Heart left ventricle (tissue), 16 donors: ENCODE measurements at regions of chr20 and their contacts with region 1.

Region 1: DNA sequence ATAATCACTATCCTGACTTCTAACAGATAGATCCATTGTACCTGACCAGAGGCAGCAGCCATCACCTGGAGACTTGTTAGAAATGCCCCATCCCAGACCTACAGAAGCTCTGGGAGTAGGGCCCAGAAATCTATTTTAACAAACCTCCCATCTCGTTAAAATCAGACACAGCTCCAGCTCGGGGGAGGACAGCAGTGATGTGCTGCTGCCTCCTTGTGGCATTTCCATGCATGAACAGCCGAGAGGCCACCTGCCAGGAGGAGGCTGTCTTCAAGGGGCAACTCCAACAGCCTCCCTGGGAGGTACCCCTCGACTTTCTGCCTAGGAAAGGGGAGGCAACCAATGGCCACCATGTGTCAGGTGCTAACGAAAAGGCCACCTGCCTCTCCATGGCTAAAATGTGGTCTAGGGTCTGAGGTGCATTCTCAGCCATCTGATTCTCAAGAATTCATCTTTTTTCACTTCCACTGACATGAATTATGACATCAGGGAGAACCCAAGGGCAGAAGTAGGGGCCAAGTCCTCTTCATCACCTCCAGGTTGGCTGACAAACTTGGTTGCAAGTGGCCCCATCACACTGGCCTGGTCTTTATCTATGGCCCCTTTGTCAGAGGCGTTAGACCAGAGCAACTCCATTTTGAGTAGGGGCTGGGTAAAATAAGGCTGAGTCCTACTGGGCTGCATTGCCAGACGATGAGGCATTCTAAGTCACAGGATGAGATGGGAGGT is 12.2 kb upstream of the KCNK15 start:
- DNase-seq: peak in 4 of 5 donors; percentile 56 to 69 (median 64)
- ATAC-seq: peak; percentile 39 to 59 (median 48)
- H3K4me3 ChIP-seq: no peak overlapping the region
- H3K27ac ChIP-seq: no peak overlapping the region
- H3K4me1 ChIP-seq: peaks cover 0 to 37% (median 11%) of the 10 kb centered on the region in 12 donors
- H3K27me3 ChIP-seq: no peaks in the 10 kb centered on the region
- CTCF ChIP-seq: peak; percentile 81 to 97 (median 92)
- POLR2A ChIP-seq: no peak

Region 2: DNA sequence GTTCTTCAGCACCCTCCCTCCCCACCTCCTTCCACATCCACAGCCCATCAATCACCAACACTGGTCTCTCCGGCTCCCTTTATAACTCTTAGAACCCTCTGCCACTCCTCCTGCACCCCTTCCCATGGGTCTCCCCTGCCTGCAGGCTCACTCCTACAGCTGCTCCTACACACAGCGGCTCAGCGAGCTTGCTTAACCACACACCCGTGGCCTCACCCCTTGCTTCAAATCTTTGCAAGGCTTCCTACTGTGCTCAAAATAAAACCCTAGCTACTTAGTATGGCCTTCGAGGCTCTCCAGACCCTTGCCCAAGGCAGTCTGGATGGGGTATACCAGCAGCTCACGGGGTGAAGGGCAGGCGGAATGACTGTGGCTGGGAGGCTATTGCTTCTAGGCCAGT is 610.3 kb before region 1 on chr20:
- intact Hi-C with region 1: no loop called
- DNase-seq: peak in 1 of 5 donors; percentile 8
- ATAC-seq: peak in 2 of 4 donors; percentile 13 to 23
- H3K4me3 ChIP-seq: no peak overlapping the region
- H3K27ac ChIP-seq: peak overlapping the region in 9 of 12 donors; percentile 1 to 75 (median 56)
- H3K4me1 ChIP-seq: peaks cover 0 to 68% (median 11%) of the 10 kb centered on the region in 12 donors
- H3K27me3 ChIP-seq: no peaks in the 10 kb centered on the region
- CTCF ChIP-seq: no peak
- POLR2A ChIP-seq: no peak

Region 3: GRCh38 chr20:44210422-44211176 is 522.9 kb before region 1 on chr20 and contains the start of gene OSER1:
- intact Hi-C with region 1: loop called in 2 of 10 experiments (anchors 10 kb)
- DNase-seq: peak; percentile 97 to 99 (median 97)
- ATAC-seq: peak; percentile 90 to 95 (median 93)
- H3K4me3 ChIP-seq: peak within 1 kb of the TSS; percentile 63 to 98 (median 84)
- H3K27ac ChIP-seq: peak within 1 kb of the TSS; percentile 85 to 97 (median 92)
- H3K4me1 ChIP-seq: peaks cover 7 to 56% (median 42%) of the 10 kb centered on the region in 12 donors
- H3K27me3 ChIP-seq: no peaks in the 10 kb centered on the region
- CTCF ChIP-seq: no peak
- POLR2A ChIP-seq: peak; percentile 77 to 89
- total RNA-seq, gene OSER1: 20.6 to 39.0 (median 34.1) TPM

Region 4: GRCh38 chr20:44532259-44532980 is 201.1 kb before region 1 on chr20:
- intact Hi-C with region 1: loop called in 2 of 10 experiments (anchors 10 kb)
- DNase-seq: no peak
- ATAC-seq: peak in 2 of 4 donors; percentile 8 to 37
- H3K4me3 ChIP-seq: peak overlapping the region; percentile 45 to 99 (median 86)
- H3K27ac ChIP-seq: peak overlapping the region in 11 of 12 donors; percentile 17 to 87 (median 76)
- H3K4me1 ChIP-seq: peaks cover 0 to 32% (median 10%) of the 10 kb centered on the region in 12 donors
- H3K27me3 ChIP-seq: peaks cover 0 to 10% (median 0%) of the 10 kb centered on the region in 9 donors
- CTCF ChIP-seq: no peak
- POLR2A ChIP-seq: no peak

Region 5: DNA sequence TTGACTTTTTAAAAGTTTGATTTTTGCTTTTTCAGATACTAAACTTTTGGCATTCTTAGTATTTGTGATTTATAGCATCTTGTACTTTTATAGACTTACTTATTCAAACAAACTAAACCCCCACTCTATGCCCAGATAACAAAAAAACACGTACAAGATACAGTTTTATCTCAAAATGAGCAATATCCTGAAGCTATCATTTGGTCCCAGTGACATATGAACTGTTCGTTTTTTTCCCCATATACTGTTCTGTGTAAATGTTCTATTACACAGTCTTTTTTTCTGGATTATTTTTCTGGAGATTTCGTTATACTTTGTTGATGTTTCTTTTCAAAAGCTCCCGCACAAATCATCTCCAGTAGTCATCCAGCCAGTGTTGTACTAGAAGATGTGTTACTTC is 184.4 kb before region 1 on chr20:
- intact Hi-C with region 1: no loop called
- DNase-seq: no peak
- ATAC-seq: no peak
- H3K4me3 ChIP-seq: peak overlapping the region in 2 of 12 donors; percentile 22 to 23
- H3K27ac ChIP-seq: peak overlapping the region; percentile 15 to 83 (median 60)
- H3K4me1 ChIP-seq: peaks cover 4 to 49% (median 31%) of the 10 kb centered on the region in 12 donors
- H3K27me3 ChIP-seq: no peaks in the 10 kb centered on the region
- CTCF ChIP-seq: no peak
- POLR2A ChIP-seq: no peak

Region 6: GRCh38 chr20:44692932-44693476 is 40.5 kb before region 1 on chr20:
- intact Hi-C with region 1: loop called in 1 of 10 experiments (anchors 2 kb)
- DNase-seq: peak; percentile 64 to 86 (median 76)
- ATAC-seq: peak; percentile 32 to 83 (median 82)
- H3K4me3 ChIP-seq: no peak overlapping the region
- H3K27ac ChIP-seq: peak overlapping the region; percentile 42 to 95 (median 82)
- H3K4me1 ChIP-seq: peaks cover 0 to 56% (median 34%) of the 10 kb centered on the region in 12 donors
- H3K27me3 ChIP-seq: no peaks in the 10 kb centered on the region
- CTCF ChIP-seq: no peak
- POLR2A ChIP-seq: peak in 1 of 2 donors; percentile 18

Region 7: GRCh38 chr20:45128071-45128470 is 394.6 kb after region 1 on chr20:
- intact Hi-C with region 1: no loop called
- DNase-seq: no peak
- ATAC-seq: no peak
- H3K4me3 ChIP-seq: no peak overlapping the region
- H3K27ac ChIP-seq: no peak overlapping the region
- H3K4me1 ChIP-seq: no peaks in the 10 kb centered on the region
- H3K27me3 ChIP-seq: peaks cover 0 to 50% (median 13%) of the 10 kb centered on the region in 9 donors
- CTCF ChIP-seq: no peak
- POLR2A ChIP-seq: no peak